Endothelial cell of umbilical vein (primary cell): ENCODE measurements at regions of chr12 and their contacts with region 1.

Region 1: GRCh38 chr12:68686595-68687521 is at the start of gene NUP107:
- DNase-seq: peak; percentile 100
- H3K4me3 ChIP-seq: peak within 1 kb of the TSS; percentile 44 to 84 (median 76)
- H3K27ac ChIP-seq: peak within 1 kb of the TSS; percentile 90
- H3K4me1 ChIP-seq: peaks cover 19% of the 10 kb centered on the region
- H3K27me3 ChIP-seq: no peaks in the 10 kb centered on the region
- CTCF ChIP-seq: peak in 1 of 2 donors; percentile 8
- POLR2A ChIP-seq: peak; percentile 97
- total RNA-seq, gene NUP107: 64.0 and 78.7 TPM in 2 replicates

Region 2: DNA sequence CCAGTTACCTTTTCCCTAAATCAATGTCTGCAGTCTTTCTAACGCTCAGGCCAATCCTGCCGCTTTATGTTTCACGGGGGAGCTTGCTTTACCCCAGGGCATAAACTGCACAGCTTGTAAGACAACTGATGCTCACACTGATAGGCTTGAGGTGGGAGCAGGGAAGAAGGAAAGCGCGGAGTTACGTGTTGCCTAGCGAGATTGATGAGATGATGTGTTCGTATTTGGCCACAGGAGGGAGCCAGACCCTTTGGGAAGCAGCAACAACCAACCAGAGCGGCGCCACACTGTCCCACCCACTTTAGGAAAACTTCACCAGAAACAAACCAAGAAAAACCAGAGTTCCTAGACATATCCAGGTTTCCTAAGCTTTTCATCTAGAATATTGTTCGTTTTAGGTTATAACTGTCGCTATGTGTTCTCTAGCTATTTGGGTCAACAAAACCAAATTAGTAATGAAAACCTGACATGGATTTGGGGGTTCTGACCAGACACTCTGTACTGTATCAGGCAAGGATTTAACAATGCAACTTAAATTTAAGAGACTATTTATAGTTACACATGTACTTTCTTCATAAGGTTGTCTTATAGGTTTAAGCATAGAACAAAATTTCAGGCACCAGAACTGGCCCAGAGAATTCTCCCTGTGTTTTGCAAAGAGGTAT is 463.6 kb before region 1 on chr12:
- CTCF ChIA-PET with region 1: no interaction called
- POLR2A ChIA-PET with region 1: no interaction called
- dilution Hi-C with region 1: no loop called
- intact Hi-C with region 1: loop called (anchors 1 kb)
- DNase-seq: peak; percentile 88
- H3K4me3 ChIP-seq: no peak overlapping the region
- H3K27ac ChIP-seq: no peak overlapping the region
- H3K4me1 ChIP-seq: peaks cover 6% of the 10 kb centered on the region
- H3K27me3 ChIP-seq: peaks cover 0 to 2% of the 10 kb centered on the region in 2 experiments
- CTCF ChIP-seq: peak; percentile 84 to 86
- POLR2A ChIP-seq: no peak

Region 3: GRCh38 chr12:68331869-68332727 is 354.8 kb before region 1 on chr12 and contains the start of gene MDM1:
- CTCF ChIA-PET with region 1: no interaction called
- POLR2A ChIA-PET with region 1: no interaction called
- dilution Hi-C with region 1: no loop called
- intact Hi-C with region 1: loop called (anchors 1 kb)
- DNase-seq: peak; percentile 98
- H3K4me3 ChIP-seq: peak within 1 kb of the TSS; percentile 57 to 93 (median 87)
- H3K27ac ChIP-seq: peak within 1 kb of the TSS; percentile 19
- H3K4me1 ChIP-seq: peaks cover 13% of the 10 kb centered on the region
- H3K27me3 ChIP-seq: peaks cover 4 to 21% of the 10 kb centered on the region in 2 experiments
- CTCF ChIP-seq: no peak
- POLR2A ChIP-seq: peak; percentile 79
- total RNA-seq, gene MDM1: 12.5 and 14.4 TPM in 2 replicates

Region 4: DNA sequence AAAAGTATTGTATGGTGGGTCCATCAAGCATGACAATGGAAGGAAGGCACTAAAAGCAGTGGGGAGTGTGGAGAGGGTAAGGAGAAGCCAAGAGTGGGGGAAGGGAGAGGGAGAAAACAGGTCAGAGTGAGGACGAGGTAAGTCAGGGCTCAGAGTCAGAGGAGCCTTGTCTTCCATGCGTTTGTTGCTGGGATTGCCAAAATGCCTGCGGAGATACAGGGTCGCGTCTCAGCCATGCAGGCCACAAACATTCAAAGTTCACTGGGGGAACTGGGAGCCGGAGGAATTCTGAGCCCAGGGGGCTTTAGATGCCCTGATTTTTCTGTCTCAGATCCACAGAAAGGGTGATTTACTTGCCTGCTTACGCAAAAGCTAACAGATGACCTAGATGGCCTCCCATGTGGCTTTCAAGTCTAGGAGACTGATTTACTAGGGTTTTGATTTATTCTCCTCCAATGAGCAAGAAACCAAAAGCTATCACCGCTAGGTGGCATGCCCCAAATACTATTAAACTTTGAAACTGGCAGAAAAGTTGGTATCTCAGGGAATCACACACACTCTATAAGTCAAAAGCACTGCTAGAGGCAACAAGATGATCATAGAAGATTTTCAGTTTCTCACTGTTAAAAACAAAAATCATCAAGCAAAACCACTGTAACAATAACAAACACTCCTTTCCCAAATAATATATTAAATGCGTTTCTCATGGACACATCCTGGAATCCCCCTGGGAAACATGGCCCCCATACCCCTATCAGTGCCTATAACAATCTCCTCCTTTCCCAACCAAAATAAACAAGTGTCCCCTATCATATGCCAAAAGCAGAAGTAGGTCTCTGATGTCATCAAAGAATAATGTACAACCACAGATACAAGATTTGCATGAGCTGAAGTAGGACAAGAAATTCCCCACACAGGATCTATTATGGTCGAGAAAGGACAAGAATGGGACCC is 328.0 kb before region 1 on chr12:
- CTCF ChIA-PET with region 1: interaction called, 3 read pairs
- POLR2A ChIA-PET with region 1: no interaction called
- dilution Hi-C with region 1: no loop called
- intact Hi-C with region 1: loop called (anchors 1 kb)
- DNase-seq: peak; percentile 83
- H3K4me3 ChIP-seq: no peak overlapping the region
- H3K27ac ChIP-seq: no peak overlapping the region
- H3K4me1 ChIP-seq: no peaks in the 10 kb centered on the region
- H3K27me3 ChIP-seq: no peaks in the 10 kb centered on the region
- CTCF ChIP-seq: peak; percentile 45 to 58
- POLR2A ChIP-seq: no peak

Region 5: GRCh38 chr12:68406134-68406594 is 280.7 kb before region 1 on chr12:
- CTCF ChIA-PET with region 1: no interaction called
- POLR2A ChIA-PET with region 1: no interaction called
- dilution Hi-C with region 1: no loop called
- intact Hi-C with region 1: loop called (anchors 2 kb)
- DNase-seq: peak; percentile 96
- H3K4me3 ChIP-seq: no peak overlapping the region
- H3K27ac ChIP-seq: no peak overlapping the region
- H3K4me1 ChIP-seq: peaks cover 21% of the 10 kb centered on the region
- H3K27me3 ChIP-seq: peaks cover 0 to 2% of the 10 kb centered on the region in 2 experiments
- CTCF ChIP-seq: peak; percentile 34 to 66
- POLR2A ChIP-seq: no peak

Region 6: DNA sequence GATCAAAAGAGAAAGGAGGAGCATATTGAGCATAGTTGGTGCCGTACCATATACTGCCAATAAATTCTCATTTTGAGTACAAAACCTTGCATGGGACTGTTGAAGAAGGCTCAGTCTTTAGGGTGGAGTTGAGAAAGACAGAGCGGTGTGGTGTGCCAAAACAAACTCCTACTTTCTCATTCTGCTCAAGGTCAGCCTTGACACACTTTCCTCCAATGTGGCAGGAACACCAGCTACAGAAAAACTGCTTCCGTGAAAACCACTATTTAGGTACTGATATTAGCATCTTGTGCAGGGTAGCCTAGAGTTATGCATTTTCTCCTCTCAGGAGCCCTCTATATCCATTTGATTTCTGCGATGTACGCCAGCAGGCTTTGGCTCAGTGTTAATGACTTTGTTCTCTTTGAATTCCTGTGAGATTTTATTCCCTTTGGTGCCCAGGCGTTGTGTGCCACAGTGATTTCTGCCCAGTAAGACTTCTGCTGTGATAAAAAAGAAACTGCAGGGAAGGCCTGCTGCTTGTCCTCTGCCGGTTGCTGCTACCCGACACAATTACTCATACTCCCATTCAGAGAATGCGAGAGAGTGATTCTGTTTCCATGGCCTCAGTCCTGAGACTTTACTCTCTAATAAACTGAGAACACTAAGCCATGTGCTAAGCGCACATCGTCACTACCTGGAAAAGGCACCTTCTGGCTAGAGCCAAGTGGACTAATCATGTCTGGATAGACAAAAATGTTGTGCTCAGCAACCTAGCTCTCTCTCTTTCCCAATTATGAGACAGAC is 266.4 kb before region 1 on chr12:
- CTCF ChIA-PET with region 1: no interaction called
- POLR2A ChIA-PET with region 1: no interaction called
- dilution Hi-C with region 1: no loop called
- intact Hi-C with region 1: loop called (anchors 1 kb)
- DNase-seq: peak; percentile 19
- H3K4me3 ChIP-seq: no peak overlapping the region
- H3K27ac ChIP-seq: no peak overlapping the region
- H3K4me1 ChIP-seq: peaks cover 6% of the 10 kb centered on the region
- H3K27me3 ChIP-seq: no peaks in the 10 kb centered on the region
- CTCF ChIP-seq: no peak
- POLR2A ChIP-seq: no peak

Region 7: GRCh38 chr12:68786929-68787328 is 100.1 kb after region 1 on chr12:
- CTCF ChIA-PET with region 1: no interaction called
- POLR2A ChIA-PET with region 1: no interaction called
- dilution Hi-C with region 1: no loop called
- intact Hi-C with region 1: loop called (anchors 1 kb)
- DNase-seq: no peak
- H3K4me3 ChIP-seq: no peak overlapping the region
- H3K27ac ChIP-seq: peak overlapping the region; percentile 87
- H3K4me1 ChIP-seq: peaks cover 18% of the 10 kb centered on the region
- H3K27me3 ChIP-seq: no peaks in the 10 kb centered on the region
- CTCF ChIP-seq: no peak
- POLR2A ChIP-seq: no peak